Caco-2 (cell line): ENCODE measurements at regions of chr19 and their contacts with region 1.

Region 1: GRCh38 chr19:56162258-56162657 is 13.6 kb upstream of the GALP start:
- DNase-seq: no peak
- H3K4me3 ChIP-seq: no peak overlapping the region
- H3K4me3 Mint-ChIP-seq: no peak overlapping the region
- H3K27ac Mint-ChIP-seq: no peak overlapping the region
- H3K4me1 ChIP-seq: no peaks in the 10 kb centered on the region
- H3K4me1 Mint-ChIP-seq: no peaks in the 10 kb centered on the region
- H3K27me3 ChIP-seq: no peaks in the 10 kb centered on the region
- H3K27me3 Mint-ChIP-seq: no peaks in the 10 kb centered on the region
- CTCF ChIP-seq: no peak

Region 2: GRCh38 chr19:56189785-56190184 is 27.5 kb after region 1 on chr19:
- CTCF ChIA-PET with region 1: no interaction called
- POLR2A ChIA-PET with region 1: no interaction called
- intact Hi-C with region 1: loop called (anchors 1 kb)
- DNase-seq: no peak
- H3K4me3 ChIP-seq: no peak overlapping the region
- H3K4me3 Mint-ChIP-seq: no peak overlapping the region
- H3K27ac Mint-ChIP-seq: no peak overlapping the region
- H3K4me1 ChIP-seq: no peaks in the 10 kb centered on the region
- H3K4me1 Mint-ChIP-seq: no peaks in the 10 kb centered on the region
- H3K27me3 ChIP-seq: no peaks in the 10 kb centered on the region
- H3K27me3 Mint-ChIP-seq: peaks cover 10% of the 10 kb centered on the region
- CTCF ChIP-seq: no peak

Region 3: DNA sequence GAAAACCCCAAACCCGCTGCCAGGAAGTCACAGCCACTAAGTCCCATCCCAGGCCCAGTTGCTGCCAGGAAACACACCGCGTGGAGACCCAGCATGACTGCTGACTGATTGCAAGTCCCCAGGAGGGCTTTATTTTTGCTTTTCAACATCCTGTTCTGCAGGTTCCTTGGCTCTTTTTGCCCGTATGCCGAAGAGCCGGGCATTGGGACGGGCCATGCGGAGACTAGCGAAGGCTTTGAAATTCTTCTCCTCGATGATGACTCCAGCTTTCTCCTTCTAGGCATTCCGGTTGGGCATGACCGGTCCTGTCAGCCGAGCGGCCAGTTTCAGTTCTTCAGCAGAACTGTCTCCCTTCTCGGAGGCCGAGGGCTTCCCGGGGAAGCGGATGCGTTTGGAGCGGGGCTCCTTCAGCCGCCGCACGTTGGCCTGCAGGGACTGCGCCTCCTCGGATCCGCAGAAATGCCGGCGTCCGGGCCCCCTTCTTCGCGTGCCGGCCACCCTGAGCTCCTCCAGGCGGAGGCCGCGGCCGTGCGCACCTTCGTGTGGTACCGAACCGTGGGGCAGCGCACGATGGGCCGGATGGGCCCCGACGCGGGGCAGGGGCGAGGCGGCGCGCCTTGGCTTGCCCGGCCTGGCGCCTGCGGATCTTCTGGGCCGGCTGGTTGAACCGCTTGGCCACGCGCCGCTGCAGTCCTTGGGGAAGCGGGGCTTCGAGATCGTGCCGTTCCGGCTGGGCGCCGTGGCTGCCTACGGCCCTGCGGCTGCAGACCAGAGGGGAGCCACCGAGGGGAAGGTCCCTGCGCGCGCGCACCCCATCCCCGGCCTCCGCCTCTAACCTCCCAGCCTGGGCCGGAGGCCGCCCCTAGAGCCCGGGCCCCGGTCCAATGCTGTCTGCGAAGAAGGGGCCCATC is 55.0 kb after region 1 on chr19:
- CTCF ChIA-PET with region 1: no interaction called
- POLR2A ChIA-PET with region 1: no interaction called
- intact Hi-C with region 1: no loop called
- DNase-seq: no peak
- H3K4me3 ChIP-seq: no peak overlapping the region
- H3K4me3 Mint-ChIP-seq: no peak overlapping the region
- H3K27ac Mint-ChIP-seq: no peak overlapping the region
- H3K4me1 ChIP-seq: no peaks in the 10 kb centered on the region
- H3K4me1 Mint-ChIP-seq: no peaks in the 10 kb centered on the region
- H3K27me3 ChIP-seq: no peaks in the 10 kb centered on the region
- H3K27me3 Mint-ChIP-seq: peaks cover 3% of the 10 kb centered on the region
- CTCF ChIP-seq: no peak